Psoas muscle (tissue), 8 donors: ENCODE measurements at regions of chr2 and their contacts with region 1.

Region 1: DNA sequence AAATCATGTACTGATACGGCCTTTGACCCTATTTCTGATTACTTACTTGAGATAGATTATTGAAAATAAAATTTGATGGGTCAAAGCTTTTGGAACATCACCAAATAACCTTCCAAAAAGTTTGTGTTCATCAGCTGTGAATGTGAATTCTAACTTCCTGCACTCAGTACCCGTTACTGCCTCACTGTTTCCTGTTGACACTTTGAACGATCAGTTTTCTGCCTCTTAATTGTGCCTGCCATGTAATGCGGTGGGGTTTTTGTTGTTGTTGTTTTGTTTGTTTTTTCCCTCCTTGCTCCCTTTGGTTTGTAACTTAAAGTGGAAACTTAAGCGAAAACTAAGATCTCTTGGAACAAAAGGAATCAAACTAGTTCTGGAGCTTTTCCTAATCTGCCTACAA is 18.9 kb downstream of the ATG16L1 start:
- DNase-seq: no peak
- ATAC-seq: no peak
- H3K4me3 ChIP-seq: no peak overlapping the region
- H3K27ac ChIP-seq: no peak overlapping the region
- H3K4me1 ChIP-seq: no peaks in the 10 kb centered on the region
- H3K27me3 ChIP-seq: no peaks in the 10 kb centered on the region
- CTCF ChIP-seq: no peak

Region 2: DNA sequence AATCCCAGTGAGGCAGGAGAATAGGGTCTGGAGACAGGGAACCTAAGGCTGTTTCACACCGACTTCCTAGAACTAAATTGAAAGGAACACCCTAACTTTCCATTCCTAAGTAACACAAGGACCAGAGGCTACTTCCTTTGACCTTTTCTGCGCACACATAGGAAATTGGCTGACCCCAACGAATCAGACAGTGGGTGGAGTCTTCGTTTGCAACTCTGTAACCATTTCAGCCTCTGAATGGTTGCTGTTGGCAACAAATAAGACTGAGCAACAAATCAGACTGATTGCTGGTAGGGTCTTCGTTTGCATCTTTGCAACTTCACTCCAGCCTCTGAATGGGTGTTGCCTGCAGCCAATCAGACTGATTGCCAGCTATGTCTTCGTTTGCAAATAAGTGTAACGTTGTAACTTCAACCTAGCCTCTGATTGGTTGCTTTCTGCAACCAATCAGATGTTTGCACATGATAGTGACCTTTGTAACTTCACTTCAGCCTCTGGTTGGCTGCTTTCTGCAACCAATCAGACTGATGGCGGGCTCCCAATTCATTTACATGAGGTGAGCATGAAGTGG is 261.6 kb after region 1 on chr2:
- intact Hi-C with region 1: loop called in 1 of 2 experiments (anchors 10 kb)
- DNase-seq: no peak
- ATAC-seq: no peak
- H3K4me3 ChIP-seq: no peak overlapping the region
- H3K27ac ChIP-seq: peak overlapping the region; percentile 28
- H3K4me1 ChIP-seq: no peaks in the 10 kb centered on the region
- H3K27me3 ChIP-seq: no peaks in the 10 kb centered on the region
- CTCF ChIP-seq: no peak

Region 3: DNA sequence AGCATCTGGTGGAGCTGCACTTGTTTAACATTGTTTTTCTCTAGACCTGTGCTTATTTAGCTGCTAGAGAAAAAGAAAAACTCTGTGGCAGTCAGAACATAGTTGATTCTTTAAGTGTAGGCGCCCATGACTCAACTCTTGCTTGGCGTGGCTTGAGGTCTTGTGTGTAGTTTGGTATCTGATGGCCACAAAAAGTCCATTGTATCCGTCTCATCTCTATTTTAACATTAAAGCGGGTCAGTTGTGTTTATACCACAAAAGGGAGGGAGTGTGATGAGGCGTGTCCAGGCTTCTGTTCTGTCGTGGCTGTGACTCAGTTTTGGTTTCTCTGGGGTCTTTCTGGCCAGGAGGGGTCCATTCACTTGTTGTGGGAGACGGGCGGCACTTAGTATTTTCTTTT is 322.8 kb after region 1 on chr2:
- intact Hi-C with region 1: no loop called
- DNase-seq: no peak
- ATAC-seq: no peak
- H3K4me3 ChIP-seq: no peak overlapping the region
- H3K27ac ChIP-seq: no peak overlapping the region
- H3K4me1 ChIP-seq: no peaks in the 10 kb centered on the region
- H3K27me3 ChIP-seq: no peaks in the 10 kb centered on the region
- CTCF ChIP-seq: no peak